ENCODE measurements at regions of chr1 and their contacts with region 1.

Region 1: GRCh38 chr1:41241782-41242341 is at the start of gene SCMH1:
- DNase-seq: peak in 1 of 2 experiments; percentile 59
- H3K4me3 ChIP-seq: peak within 1 kb of the TSS; percentile 65
- H3K27ac ChIP-seq: peak within 1 kb of the TSS; percentile 40; the same call in 1 of the 2 replicates
- H3K4me1 ChIP-seq: peaks cover 41% of the 10 kb centered on the region
- H3K27me3 ChIP-seq: no peaks in the 10 kb centered on the region
- CTCF ChIP-seq: no peak
- total RNA-seq, gene SCMH1: 35.4 and 39.5 TPM in 2 replicates

Region 2: DNA sequence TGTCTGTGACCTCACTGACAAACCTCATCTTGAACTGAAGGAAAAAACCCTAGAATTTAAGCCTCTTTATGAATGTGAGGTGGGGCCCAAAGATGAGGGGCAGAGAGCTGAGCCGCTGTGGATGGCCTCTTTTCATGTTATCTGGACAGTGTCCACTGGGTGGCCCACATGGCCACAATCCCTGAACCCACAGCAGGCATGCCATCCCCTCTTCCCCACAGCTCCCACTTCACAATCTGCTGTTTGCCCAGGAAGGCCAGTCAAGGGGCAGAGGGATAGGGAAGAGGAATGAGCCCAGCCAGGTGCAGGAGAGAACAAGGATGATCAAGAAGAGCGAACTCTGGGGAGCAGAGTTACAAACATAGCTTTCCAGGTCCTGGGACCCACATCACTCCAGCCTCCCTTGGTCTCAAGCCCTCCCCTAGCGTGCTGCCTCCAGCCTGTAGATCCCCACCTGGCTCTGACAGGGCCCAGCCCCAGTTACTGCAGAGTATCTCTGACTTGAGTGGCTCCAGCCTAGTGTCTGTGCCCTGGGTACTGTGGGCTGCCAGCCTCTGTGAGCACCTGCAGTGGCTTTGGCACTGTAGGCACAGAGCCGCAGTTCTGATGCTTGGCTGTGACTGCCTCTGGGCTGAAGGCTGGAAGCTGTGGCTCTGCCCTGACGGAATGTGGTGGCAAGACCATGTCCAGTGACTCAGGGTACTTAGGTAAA is 218.4 kb before region 1 on chr1:
- CTCF ChIA-PET with region 1: interaction called, 6 read pairs
- POLR2A ChIA-PET with region 1: no interaction called
- intact Hi-C with region 1: loop called (anchors 10 kb)
- DNase-seq: no peak
- H3K4me3 ChIP-seq: no peak overlapping the region
- H3K27ac ChIP-seq: no peak overlapping the region
- H3K4me1 ChIP-seq: no peaks in the 10 kb centered on the region
- H3K27me3 ChIP-seq: no peaks in the 10 kb centered on the region
- CTCF ChIP-seq: peak; percentile 46

Region 3: DNA sequence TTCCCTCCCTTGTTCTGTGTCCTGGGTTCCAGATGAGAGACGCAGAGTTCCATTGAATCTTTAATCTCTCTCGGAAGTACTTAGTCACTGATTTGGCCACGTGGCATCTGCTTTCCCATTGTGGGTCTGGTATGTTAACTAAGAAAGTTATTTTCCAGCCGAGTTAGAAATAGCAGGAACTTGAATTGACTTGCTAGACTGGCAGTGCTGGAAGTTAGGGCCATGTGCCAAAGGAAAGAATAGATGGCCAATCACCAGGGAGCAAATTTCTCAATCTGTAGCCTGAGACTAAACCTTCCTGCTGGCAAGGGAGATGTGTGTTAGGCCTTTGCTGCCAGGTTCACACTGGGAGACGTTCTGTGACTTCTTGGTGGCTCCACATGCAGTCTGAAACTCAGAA is 196.1 kb before region 1 on chr1:
- CTCF ChIA-PET with region 1: interaction called, 3 read pairs
- POLR2A ChIA-PET with region 1: no interaction called
- intact Hi-C with region 1: loop called (anchors 5 kb)
- DNase-seq: peak; percentile 57 to 63
- H3K4me3 ChIP-seq: no peak overlapping the region
- H3K27ac ChIP-seq: no peak overlapping the region
- H3K4me1 ChIP-seq: 0 out of 2 replicates have a peak, but pooled peaks cover 6% of the 10 kb centered on the region
- H3K27me3 ChIP-seq: no peaks in the 10 kb centered on the region
- CTCF ChIP-seq: no peak

Region 4: GRCh38 chr1:41109316-41110197 is 132.3 kb before region 1 on chr1:
- CTCF ChIA-PET with region 1: interaction called, 6 read pairs
- POLR2A ChIA-PET with region 1: no interaction called
- intact Hi-C with region 1: loop called (anchors 1 kb)
- DNase-seq: peak; percentile 66 to 92
- H3K4me3 ChIP-seq: peak overlapping the region; percentile 37; the same call in 1 of the 2 replicates
- H3K27ac ChIP-seq: peak overlapping the region; percentile 94
- H3K4me1 ChIP-seq: peaks cover 45% of the 10 kb centered on the region
- H3K27me3 ChIP-seq: no peaks in the 10 kb centered on the region
- CTCF ChIP-seq: no peak

Region 5: GRCh38 chr1:41226815-41227434 is 14.9 kb before region 1 on chr1:
- CTCF ChIA-PET with region 1: no interaction called
- POLR2A ChIA-PET with region 1: no interaction called
- intact Hi-C with region 1: no loop called
- DNase-seq: no peak
- H3K4me3 ChIP-seq: no peak overlapping the region
- H3K27ac ChIP-seq: no peak overlapping the region
- H3K4me1 ChIP-seq: no peaks in the 10 kb centered on the region
- H3K27me3 ChIP-seq: no peaks in the 10 kb centered on the region
- CTCF ChIP-seq: no peak